Activated CD4-positive, alpha-beta T cell treated with anti-CD3 and anti-CD28 coated beads, Interleukin-2, amount 10 ng/mL, durations not matched to agents 24 days and 14 days (primary cell): ENCODE measurements at regions of chr10 and their contacts with region 1.

Region 1: GRCh38 chr10:78972947-78973900 is 95.5 kb upstream of the ZMIZ1 start:
- DNase-seq: peak; percentile 93
- H3K4me3 Mint-ChIP-seq: peak overlapping the region; percentile 70
- H3K27ac Mint-ChIP-seq: peak overlapping the region; percentile 91
- H3K4me1 Mint-ChIP-seq: peaks cover 40% of the 10 kb centered on the region
- H3K27me3 Mint-ChIP-seq: peaks cover 5% of the 10 kb centered on the region

Region 2: GRCh38 chr10:78302989-78303854 is 670.0 kb before region 1 on chr10:
- intact Hi-C with region 1: loop called (anchors 5 kb)
- DNase-seq: peak; percentile 97
- H3K4me3 Mint-ChIP-seq: peak overlapping the region; percentile 93
- H3K27ac Mint-ChIP-seq: peak overlapping the region; percentile 96
- H3K4me1 Mint-ChIP-seq: peaks cover 14% of the 10 kb centered on the region
- H3K27me3 Mint-ChIP-seq: peaks cover 23% of the 10 kb centered on the region

Region 3: DNA sequence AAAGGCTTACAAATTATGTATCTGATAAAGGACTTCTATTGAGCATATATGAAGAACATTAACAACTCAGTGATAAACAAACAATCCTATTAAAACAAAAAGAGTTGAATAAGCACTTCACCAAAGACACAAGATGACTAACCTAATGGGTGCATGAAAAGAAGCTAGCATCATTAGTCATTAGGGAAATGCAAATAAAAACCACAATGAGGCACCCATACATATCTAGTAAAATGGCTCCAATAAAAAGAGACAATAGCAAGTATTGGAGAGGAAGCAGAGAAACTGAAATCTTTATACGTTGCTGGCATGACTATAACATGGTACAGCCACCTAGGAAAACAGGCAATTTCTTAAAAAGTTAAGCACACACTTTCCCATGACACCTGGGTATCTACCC is 18.0 kb after region 1 on chr10:
- intact Hi-C with region 1: loop called (anchors 1 kb)
- DNase-seq: no peak
- H3K4me3 Mint-ChIP-seq: no peak overlapping the region
- H3K27ac Mint-ChIP-seq: no peak overlapping the region
- H3K4me1 Mint-ChIP-seq: peaks cover 3% of the 10 kb centered on the region
- H3K27me3 Mint-ChIP-seq: peaks cover 8% of the 10 kb centered on the region

Region 4: GRCh38 chr10:79084012-79084971 is 111.1 kb after region 1 on chr10:
- intact Hi-C with region 1: no loop called
- DNase-seq: peak; percentile 74
- H3K4me3 Mint-ChIP-seq: no peak overlapping the region
- H3K27ac Mint-ChIP-seq: peak overlapping the region; percentile 39
- H3K4me1 Mint-ChIP-seq: peaks cover 19% of the 10 kb centered on the region
- H3K27me3 Mint-ChIP-seq: no peaks in the 10 kb centered on the region

Region 5: GRCh38 chr10:79347226-79347893 is 374.1 kb after region 1 on chr10 and contains the start of gene PPIF:
- intact Hi-C with region 1: loop called (anchors 10 kb)
- DNase-seq: peak; percentile 99
- H3K4me3 Mint-ChIP-seq: peak within 1 kb of the TSS; percentile 93
- H3K27ac Mint-ChIP-seq: peak within 1 kb of the TSS; percentile 94
- H3K4me1 Mint-ChIP-seq: peaks cover 47% of the 10 kb centered on the region
- H3K27me3 Mint-ChIP-seq: no peaks in the 10 kb centered on the region
- total RNA-seq, gene PPIF: 157 and 161 TPM in 2 replicates